ENCODE measurements at regions of chr22 and their contacts with region 1.

Region 1: GRCh38 chr22:41966607-41967240 is 2.5 kb upstream of the SEPTIN3 start:
- DNase-seq: peak; percentile 91
- H3K4me3 ChIP-seq: no peak overlapping the region
- H3K27ac ChIP-seq: no peak overlapping the region
- H3K4me1 ChIP-seq: no peaks in the 10 kb centered on the region
- H3K27me3 ChIP-seq: peaks cover 6% of the 10 kb centered on the region; the same call in 1 of the 2 replicates

Region 2: GRCh38 chr22:42127606-42128005 is 160.9 kb after region 1 on chr22:
- in situ Hi-C with region 1: no loop called
- DNase-seq: no peak
- H3K4me3 ChIP-seq: no peak overlapping the region
- H3K27ac ChIP-seq: no peak overlapping the region
- H3K4me1 ChIP-seq: no peaks in the 10 kb centered on the region
- H3K27me3 ChIP-seq: no peaks in the 10 kb centered on the region

Region 3: GRCh38 chr22:42459287-42460063 is 492.8 kb after region 1 on chr22:
- in situ Hi-C with region 1: loop called (anchors 10 kb)
- DNase-seq: no peak
- H3K4me3 ChIP-seq: no peak overlapping the region
- H3K27ac ChIP-seq: no peak overlapping the region
- H3K4me1 ChIP-seq: no peaks in the 10 kb centered on the region
- H3K27me3 ChIP-seq: peaks cover 64% of the 10 kb centered on the region